Activated CD4-positive, alpha-beta memory T cell treated with anti-CD3 and anti-CD28 coated beads for 36 hours (primary cell): ENCODE measurements at regions of chr6 and their contacts with region 1.

Region 1: GRCh38 chr6:150068720-150069648 is at the start of gene ULBP3:
- DNase-seq: peak; percentile 87
- H3K4me3 Mint-ChIP-seq: peak within 1 kb of the TSS; percentile 66
- H3K27ac Mint-ChIP-seq: no peak within 1 kb of the TSS
- H3K4me1 Mint-ChIP-seq: peaks cover 11% of the 10 kb centered on the region
- H3K27me3 Mint-ChIP-seq: peaks cover 13% of the 10 kb centered on the region
- total RNA-seq, gene ULBP3: 0.61 TPM in 1 of 2 experiments, not detected in the other

Region 2: GRCh38 chr6:149431905-149432775 is 636.8 kb before region 1 on chr6:
- CTCF ChIA-PET with region 1: no interaction called
- POLR2A ChIA-PET with region 1: no interaction called
- intact Hi-C with region 1: no loop called
- DNase-seq: peak; percentile 95
- H3K4me3 Mint-ChIP-seq: no peak overlapping the region
- H3K27ac Mint-ChIP-seq: peak overlapping the region; percentile 58
- H3K4me1 Mint-ChIP-seq: peaks cover 5% of the 10 kb centered on the region
- H3K27me3 Mint-ChIP-seq: no peaks in the 10 kb centered on the region

Region 3: DNA sequence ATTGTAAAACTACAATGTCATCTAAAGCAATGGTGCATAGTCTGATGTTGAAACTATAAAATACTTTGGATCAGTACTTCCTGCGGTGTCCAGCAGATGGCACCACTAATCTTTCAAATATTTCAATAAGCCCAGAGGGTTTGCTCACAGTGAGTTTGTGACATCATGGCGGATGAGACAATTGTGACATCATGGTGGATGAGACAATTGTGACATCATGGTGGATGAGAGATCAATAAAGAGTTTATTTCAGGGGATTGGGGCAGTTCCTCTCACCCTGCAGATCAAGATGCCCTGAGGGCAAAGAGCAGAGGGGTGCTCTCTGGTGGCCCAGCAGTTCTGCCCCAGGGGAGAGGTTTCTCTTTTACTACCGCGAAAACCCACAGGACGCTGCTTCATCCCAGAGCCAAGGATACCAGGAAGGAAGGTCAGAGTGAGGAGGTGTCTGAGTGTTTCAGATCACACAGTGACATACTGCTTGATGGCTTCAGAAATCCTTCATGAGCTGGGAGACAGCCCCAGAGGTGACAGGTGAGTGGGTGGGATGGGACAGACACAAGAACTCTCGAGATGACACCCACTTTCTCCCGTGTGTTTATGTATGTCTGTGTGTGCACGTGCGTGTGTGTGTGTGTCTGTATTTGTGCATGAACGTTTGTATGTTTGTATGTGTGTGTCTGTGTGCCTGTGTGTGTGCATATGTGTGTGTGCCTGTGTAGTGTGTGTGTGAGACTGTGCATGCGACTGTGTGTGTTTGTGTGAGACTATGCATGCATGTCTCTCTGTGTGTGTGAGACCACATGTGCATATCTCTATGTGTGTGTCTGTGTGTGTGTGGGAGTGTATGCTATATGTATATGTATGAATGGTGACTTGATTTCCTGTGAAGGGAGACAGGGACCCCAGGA is 134.5 kb before region 1 on chr6:
- CTCF ChIA-PET with region 1: no interaction called
- POLR2A ChIA-PET with region 1: interaction called, 3 read pairs
- intact Hi-C with region 1: loop called (anchors 1 kb)
- DNase-seq: peak; percentile 76
- H3K4me3 Mint-ChIP-seq: no peak overlapping the region
- H3K27ac Mint-ChIP-seq: peak overlapping the region; percentile 49
- H3K4me1 Mint-ChIP-seq: peaks cover 22% of the 10 kb centered on the region
- H3K27me3 Mint-ChIP-seq: peaks cover 82% of the 10 kb centered on the region

Region 4: GRCh38 chr6:150025201-150025917 is 43.6 kb before region 1 on chr6 and contains the start of gene RAET1L:
- CTCF ChIA-PET with region 1: interaction called, 3 read pairs
- POLR2A ChIA-PET with region 1: no interaction called
- intact Hi-C with region 1: loop called (anchors 5 kb)
- DNase-seq: peak; percentile 62
- H3K4me3 Mint-ChIP-seq: no peak within 1 kb of the TSS
- H3K27ac Mint-ChIP-seq: no peak within 1 kb of the TSS
- H3K4me1 Mint-ChIP-seq: peaks cover 15% of the 10 kb centered on the region
- H3K27me3 Mint-ChIP-seq: peaks cover 38% of the 10 kb centered on the region
- total RNA-seq, gene RAET1L: not detected

Region 5: GRCh38 chr6:150056156-150056555 is 12.8 kb before region 1 on chr6:
- CTCF ChIA-PET with region 1: interaction called, 28 read pairs
- POLR2A ChIA-PET with region 1: no interaction called
- intact Hi-C with region 1: no loop called
- DNase-seq: no peak
- H3K4me3 Mint-ChIP-seq: no peak overlapping the region
- H3K27ac Mint-ChIP-seq: no peak overlapping the region
- H3K4me1 Mint-ChIP-seq: peaks cover 8% of the 10 kb centered on the region
- H3K27me3 Mint-ChIP-seq: peaks cover 42% of the 10 kb centered on the region

Region 6: GRCh38 chr6:150079604-150080003 is 10.6 kb after region 1 on chr6:
- CTCF ChIA-PET with region 1: interaction called, 41 read pairs
- POLR2A ChIA-PET with region 1: interaction called, 7 read pairs
- intact Hi-C with region 1: no loop called
- DNase-seq: peak; percentile 45
- H3K4me3 Mint-ChIP-seq: no peak overlapping the region
- H3K27ac Mint-ChIP-seq: no peak overlapping the region
- H3K4me1 Mint-ChIP-seq: peaks cover 17% of the 10 kb centered on the region
- H3K27me3 Mint-ChIP-seq: peaks cover 29% of the 10 kb centered on the region

Region 7: GRCh38 chr6:150099546-150099945 is 30.6 kb after region 1 on chr6:
- CTCF ChIA-PET with region 1: no interaction called
- POLR2A ChIA-PET with region 1: no interaction called
- intact Hi-C with region 1: no loop called
- DNase-seq: no peak
- H3K4me3 Mint-ChIP-seq: no peak overlapping the region
- H3K27ac Mint-ChIP-seq: no peak overlapping the region
- H3K4me1 Mint-ChIP-seq: no peaks in the 10 kb centered on the region
- H3K27me3 Mint-ChIP-seq: peaks cover 6% of the 10 kb centered on the region

Region 8: GRCh38 chr6:150334790-150335783 is 266.1 kb after region 1 on chr6:
- CTCF ChIA-PET with region 1: interaction called, 15 read pairs
- POLR2A ChIA-PET with region 1: no interaction called
- intact Hi-C with region 1: no loop called
- DNase-seq: peak; percentile 46
- H3K4me3 Mint-ChIP-seq: no peak overlapping the region
- H3K27ac Mint-ChIP-seq: no peak overlapping the region
- H3K4me1 Mint-ChIP-seq: no peaks in the 10 kb centered on the region
- H3K27me3 Mint-ChIP-seq: peaks cover 20% of the 10 kb centered on the region